Sigmoid colon (tissue), 7 donors: ENCODE measurements at regions of chr10 and their contacts with region 1.

Region 1: GRCh38 chr10:79184145-79184625 is 115.4 kb downstream of the ZMIZ1 start:
- DNase-seq: no peak
- H3K4me3 ChIP-seq: no peak overlapping the region
- H3K27ac ChIP-seq: peak overlapping the region; percentile 58 to 82 (median 73)
- H3K4me1 ChIP-seq: peaks cover 0 to 98% (median 89%) of the 10 kb centered on the region in 4 donors
- H3K27me3 ChIP-seq: no peaks in the 10 kb centered on the region
- CTCF ChIP-seq: no peak
- EP300 ChIP-seq: no peak
- POLR2A ChIP-seq: no peak

Region 2: DNA sequence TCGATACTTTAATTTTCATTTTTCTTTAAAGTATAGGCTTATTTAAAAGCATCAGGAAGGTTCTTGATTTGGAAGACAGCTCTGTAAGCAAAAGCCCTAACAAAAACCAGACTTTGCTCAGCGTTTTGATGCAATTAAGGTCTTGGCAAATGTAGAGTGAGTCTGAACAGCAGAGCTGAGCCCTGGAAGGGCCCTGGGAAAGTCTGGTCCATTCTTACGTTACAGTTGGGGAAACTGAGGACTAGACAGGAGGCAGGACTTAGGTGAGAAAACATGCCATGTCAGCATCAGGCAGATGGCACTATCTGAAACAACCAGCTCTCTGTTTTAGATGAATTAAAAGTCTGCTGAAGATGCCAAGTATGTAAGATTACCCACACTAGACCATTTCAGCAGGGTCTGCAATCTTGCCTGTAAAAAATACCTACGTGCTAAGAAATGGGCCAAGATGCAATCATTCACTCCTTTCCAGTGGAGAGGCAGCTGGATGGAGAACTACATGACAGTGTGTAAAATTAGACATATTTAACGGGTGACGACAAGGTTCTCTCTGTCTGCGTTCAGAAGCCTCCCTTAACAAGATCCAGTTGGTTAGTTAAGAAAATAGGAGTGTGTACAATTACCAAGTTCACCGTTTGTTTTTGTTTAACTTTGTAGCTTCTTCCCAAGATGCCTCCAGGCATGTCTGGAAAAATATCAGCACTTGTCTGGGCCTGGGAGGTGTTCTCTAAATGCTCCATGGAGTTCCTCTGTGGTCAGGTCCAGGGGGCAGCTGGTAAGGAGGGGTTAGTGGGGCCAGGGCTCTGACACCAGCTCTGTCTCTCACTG is 617.7 kb before region 1 on chr10:
- intact Hi-C with region 1: loop called (anchors 10 kb)
- DNase-seq: peak; percentile 60
- H3K4me3 ChIP-seq: no peak overlapping the region
- H3K27ac ChIP-seq: peak overlapping the region in 3 of 4 donors; percentile 30 to 68 (median 55)
- H3K4me1 ChIP-seq: peaks cover 0 to 62% (median 45%) of the 10 kb centered on the region in 4 donors
- H3K27me3 ChIP-seq: no peaks in the 10 kb centered on the region
- CTCF ChIP-seq: no peak
- EP300 ChIP-seq: no peak
- POLR2A ChIP-seq: no peak

Region 3: DNA sequence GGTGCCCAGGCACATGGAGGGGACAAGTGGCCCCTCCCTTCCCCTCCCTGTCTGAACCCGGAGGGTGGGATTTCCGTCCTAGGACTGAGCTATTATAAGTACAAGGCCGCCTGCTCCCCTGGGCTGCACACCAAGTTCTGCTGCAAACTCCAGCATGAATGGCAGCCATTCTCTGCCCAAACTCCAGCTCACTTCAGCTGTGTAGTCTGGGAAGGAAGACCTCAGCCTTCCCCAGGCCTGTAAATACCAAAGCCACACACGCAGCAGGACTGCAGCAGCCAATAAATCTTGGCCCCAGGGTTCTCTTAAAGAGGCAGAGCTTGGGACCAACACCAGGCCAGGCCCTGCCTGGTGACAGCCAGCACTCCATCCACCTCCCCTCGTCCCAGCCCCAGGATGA is 406.7 kb before region 1 on chr10:
- intact Hi-C with region 1: loop called (anchors 10 kb)
- DNase-seq: peak; percentile 94
- H3K4me3 ChIP-seq: no peak overlapping the region
- H3K27ac ChIP-seq: peak overlapping the region; percentile 48 to 87 (median 84)
- H3K4me1 ChIP-seq: peaks cover 0 to 59% (median 51%) of the 10 kb centered on the region in 4 donors
- H3K27me3 ChIP-seq: no peaks in the 10 kb centered on the region
- CTCF ChIP-seq: no peak
- EP300 ChIP-seq: peak in 3 of 4 donors; percentile 72 to 89 (median 84)
- POLR2A ChIP-seq: no peak